IMR-90 (cell line): ENCODE measurements at regions of chr17 and their contacts with region 1.

Region 1: GRCh38 chr17:21284319-21285163 is at the start of gene MAP2K3:
- DNase-seq: peak; percentile 99
- ATAC-seq: peak; percentile 81
- H3K4me3 ChIP-seq: peak within 1 kb of the TSS; percentile 84
- H3K27ac ChIP-seq: peak within 1 kb of the TSS; percentile 83
- H3K4me1 ChIP-seq: peaks cover 47% of the 10 kb centered on the region
- H3K27me3 ChIP-seq: no peaks in the 10 kb centered on the region
- CTCF ChIP-seq: no peak
- POLR2A ChIP-seq: peak; percentile 97
- RAD21 ChIP-seq: no peak
- total RNA-seq, gene MAP2K3: 23.5 and 25.0 TPM in 2 replicates

Region 2: GRCh38 chr17:21043286-21044232 is 241.0 kb before region 1 on chr17:
- CTCF ChIA-PET with region 1: no interaction called
- POLR2A ChIA-PET with region 1: no interaction called
- dilution Hi-C with region 1: no loop called
- in situ Hi-C with region 1: no loop called
- intact Hi-C with region 1: loop called (anchors 1 kb)
- DNase-seq: peak; percentile 98
- ATAC-seq: peak; percentile 82
- H3K4me3 ChIP-seq: peak overlapping the region; percentile 56
- H3K27ac ChIP-seq: peak overlapping the region; percentile 93
- H3K4me1 ChIP-seq: peaks cover 9% of the 10 kb centered on the region
- H3K27me3 ChIP-seq: no peaks in the 10 kb centered on the region
- CTCF ChIP-seq: peak; percentile 70
- POLR2A ChIP-seq: no peak
- RAD21 ChIP-seq: peak; percentile 44

Region 3: GRCh38 chr17:21126645-21127510 is 157.7 kb before region 1 on chr17 and contains the start of gene DHRS7B:
- CTCF ChIA-PET with region 1: interaction called, 3 read pairs
- POLR2A ChIA-PET with region 1: no interaction called
- dilution Hi-C with region 1: no loop called
- in situ Hi-C with region 1: no loop called
- intact Hi-C with region 1: loop called (anchors 1 kb)
- DNase-seq: peak; percentile 88
- ATAC-seq: peak; percentile 93
- H3K4me3 ChIP-seq: peak within 1 kb of the TSS; percentile 64
- H3K27ac ChIP-seq: peak within 1 kb of the TSS; percentile 62
- H3K4me1 ChIP-seq: no peaks in the 10 kb centered on the region
- H3K27me3 ChIP-seq: no peaks in the 10 kb centered on the region
- CTCF ChIP-seq: no peak
- POLR2A ChIP-seq: peak; percentile 70
- RAD21 ChIP-seq: no peak
- total RNA-seq, gene DHRS7B: 24.2 and 34.4 TPM in 2 replicates

Region 4: GRCh38 chr17:21451975-21452374 is 167.4 kb after region 1 on chr17:
- CTCF ChIA-PET with region 1: no interaction called
- POLR2A ChIA-PET with region 1: no interaction called
- dilution Hi-C with region 1: no loop called
- in situ Hi-C with region 1: no loop called
- intact Hi-C with region 1: loop called (anchors 2 kb)
- DNase-seq: no peak
- ATAC-seq: no peak
- H3K4me3 ChIP-seq: no peak overlapping the region
- H3K27ac ChIP-seq: no peak overlapping the region
- H3K4me1 ChIP-seq: no peaks in the 10 kb centered on the region
- H3K27me3 ChIP-seq: peaks cover 20% of the 10 kb centered on the region
- CTCF ChIP-seq: no peak
- POLR2A ChIP-seq: no peak
- RAD21 ChIP-seq: no peak

Region 5: GRCh38 chr17:21539146-21539545 is 254.6 kb after region 1 on chr17:
- CTCF ChIA-PET with region 1: no interaction called
- POLR2A ChIA-PET with region 1: no interaction called
- dilution Hi-C with region 1: no loop called
- in situ Hi-C with region 1: no loop called
- intact Hi-C with region 1: no loop called
- DNase-seq: peak; percentile 27
- ATAC-seq: no peak
- H3K4me3 ChIP-seq: no peak overlapping the region
- H3K27ac ChIP-seq: no peak overlapping the region
- H3K4me1 ChIP-seq: no peaks in the 10 kb centered on the region; the same call in 1 of the 2 replicates
- H3K27me3 ChIP-seq: no peaks in the 10 kb centered on the region
- CTCF ChIP-seq: no peak
- POLR2A ChIP-seq: no peak
- RAD21 ChIP-seq: no peak